Breast epithelium (tissue), 4 donors: ENCODE measurements at regions of chr14 and their contacts with region 1.

Region 1: GRCh38 chr14:105337966-105338741 is 23.6 kb downstream of the PACS2 start:
- DNase-seq: no peak
- H3K4me3 ChIP-seq: no peak overlapping the region
- H3K27ac ChIP-seq: peak overlapping the region in 1 of 2 donors; percentile 7
- H3K4me1 ChIP-seq: no peaks in the 10 kb centered on the region
- H3K27me3 ChIP-seq: no peaks in the 10 kb centered on the region
- CTCF ChIP-seq: no peak
- POLR2A ChIP-seq: no peak

Region 2: GRCh38 chr14:104893435-104894207 is 444.5 kb before region 1 on chr14:
- intact Hi-C with region 1: loop called (anchors 2 kb)
- DNase-seq: no peak
- H3K4me3 ChIP-seq: no peak overlapping the region
- H3K27ac ChIP-seq: no peak overlapping the region
- H3K4me1 ChIP-seq: no peaks in the 10 kb centered on the region
- H3K27me3 ChIP-seq: no peaks in the 10 kb centered on the region
- CTCF ChIP-seq: no peak
- POLR2A ChIP-seq: no peak

Region 3: DNA sequence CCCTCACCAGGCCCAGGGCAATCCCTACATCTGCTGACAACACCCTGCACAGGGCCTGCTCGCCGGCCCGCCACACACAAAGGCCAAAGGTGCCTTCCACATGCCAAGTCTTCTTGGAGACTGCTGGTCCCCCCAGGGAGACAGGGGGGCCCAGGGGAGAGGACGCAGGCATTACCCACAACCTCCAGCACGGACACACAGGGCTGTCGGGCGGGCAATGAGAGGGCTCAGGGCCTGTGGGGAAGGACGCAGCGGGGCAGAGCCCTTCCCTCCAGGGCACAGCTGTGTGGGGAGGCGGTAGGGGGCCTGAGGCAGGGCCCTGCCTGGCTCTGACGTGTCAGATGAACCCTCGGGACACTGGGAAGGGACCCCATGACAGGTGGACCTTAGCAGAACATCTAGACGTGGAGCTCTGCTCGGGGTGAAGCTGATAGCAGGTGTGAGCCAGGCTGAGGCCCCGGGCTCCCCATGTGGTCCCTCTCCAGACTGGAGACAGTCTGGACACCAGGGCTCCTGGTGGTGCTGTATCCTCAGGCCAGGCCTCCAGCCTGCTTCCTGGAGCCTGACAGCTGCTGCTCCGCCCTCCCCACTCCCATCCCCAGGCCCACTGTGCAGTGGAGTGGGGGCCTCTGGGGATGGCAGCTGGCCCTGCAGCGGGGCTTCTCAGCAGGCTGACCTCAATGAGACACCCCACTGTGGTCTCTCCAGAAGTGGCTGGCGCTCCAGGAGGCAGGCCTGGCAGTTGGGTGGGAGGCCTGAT is 125.4 kb before region 1 on chr14:
- intact Hi-C with region 1: loop called (anchors 10 kb)
- DNase-seq: no peak
- H3K4me3 ChIP-seq: no peak overlapping the region
- H3K27ac ChIP-seq: no peak overlapping the region
- H3K4me1 ChIP-seq: no peaks in the 10 kb centered on the region
- H3K27me3 ChIP-seq: no peaks in the 10 kb centered on the region
- CTCF ChIP-seq: no peak
- POLR2A ChIP-seq: no peak